ENCODE measurements at regions of chr14 and their contacts with region 1.

Region 1: GRCh38 chr14:103855063-103855733 is 7.8 kb upstream of the PPP1R13B start:
- DNase-seq: no peak
- ATAC-seq: no peak
- H3K4me3 ChIP-seq: no peak overlapping the region
- H3K4me3 Mint-ChIP-seq: no peak overlapping the region
- H3K27ac ChIP-seq: no peak overlapping the region
- H3K27ac Mint-ChIP-seq: no peak overlapping the region
- H3K4me1 ChIP-seq: no peaks in the 10 kb centered on the region
- H3K4me1 Mint-ChIP-seq: peaks cover 7% of the 10 kb centered on the region
- H3K27me3 ChIP-seq: no peaks in the 10 kb centered on the region
- H3K27me3 Mint-ChIP-seq: no peaks in the 10 kb centered on the region
- CTCF ChIP-seq: no peak

Region 2: DNA sequence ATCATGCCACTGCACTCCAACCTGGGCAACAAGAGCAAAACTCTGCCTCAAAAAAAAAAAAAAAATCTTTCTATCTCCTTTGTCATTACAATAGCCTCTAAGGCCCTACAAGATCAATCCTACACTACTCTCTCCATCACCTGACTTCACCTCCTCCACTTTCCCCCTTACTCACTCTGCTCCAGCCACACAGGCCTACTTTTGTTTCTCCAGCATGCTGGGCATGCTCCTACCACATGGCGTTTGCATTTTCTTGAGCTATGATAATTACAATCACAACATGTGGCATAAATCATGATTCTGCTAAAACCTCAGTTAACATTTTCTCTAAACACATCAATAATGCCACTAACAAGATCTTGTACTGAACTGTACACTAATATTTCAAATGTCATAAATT is 15.6 kb before region 1 on chr14:
- CTCF ChIA-PET with region 1: no interaction called
- POLR2A ChIA-PET with region 1: no interaction called
- intact Hi-C with region 1: loop called in 1 of 2 experiments (anchors 2 kb)
- DNase-seq: no peak
- ATAC-seq: no peak
- H3K4me3 ChIP-seq: no peak overlapping the region
- H3K4me3 Mint-ChIP-seq: no peak overlapping the region
- H3K27ac ChIP-seq: no peak overlapping the region
- H3K27ac Mint-ChIP-seq: no peak overlapping the region
- H3K4me1 ChIP-seq: no peaks in the 10 kb centered on the region
- H3K4me1 Mint-ChIP-seq: peaks cover 18% of the 10 kb centered on the region
- H3K27me3 ChIP-seq: no peaks in the 10 kb centered on the region
- H3K27me3 Mint-ChIP-seq: no peaks in the 10 kb centered on the region
- CTCF ChIP-seq: no peak